Caco-2 (cell line): ENCODE measurements at regions of chr2 and their contacts with region 1.

Region 1: DNA sequence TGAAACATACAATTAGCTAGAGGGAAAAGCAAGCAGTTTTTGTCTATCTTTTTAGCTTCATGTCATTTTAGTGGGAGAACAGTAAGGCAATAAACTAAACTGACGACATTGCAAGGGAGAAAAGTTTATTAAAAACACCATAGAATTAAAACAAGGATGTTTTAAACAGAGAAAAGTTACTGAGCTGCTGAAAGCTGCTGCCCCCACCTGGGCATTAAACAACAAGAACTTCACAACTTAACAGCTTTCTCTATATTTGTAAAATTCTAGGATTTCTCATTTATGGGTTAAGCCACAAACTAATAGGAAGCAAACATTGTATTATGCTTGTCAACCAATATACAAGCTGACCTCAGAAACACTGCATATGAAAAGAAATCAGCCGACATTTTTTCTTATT is 289.2 kb downstream of the ERBB4 start:
- DNase-seq: no peak
- H3K4me3 ChIP-seq: no peak overlapping the region
- H3K4me3 Mint-ChIP-seq: no peak overlapping the region
- H3K27ac Mint-ChIP-seq: no peak overlapping the region
- H3K4me1 ChIP-seq: no peaks in the 10 kb centered on the region
- H3K4me1 Mint-ChIP-seq: no peaks in the 10 kb centered on the region
- H3K27me3 ChIP-seq: no peaks in the 10 kb centered on the region
- H3K27me3 Mint-ChIP-seq: peaks cover 3% of the 10 kb centered on the region
- CTCF ChIP-seq: peak; percentile 25 to 34

Region 2: DNA sequence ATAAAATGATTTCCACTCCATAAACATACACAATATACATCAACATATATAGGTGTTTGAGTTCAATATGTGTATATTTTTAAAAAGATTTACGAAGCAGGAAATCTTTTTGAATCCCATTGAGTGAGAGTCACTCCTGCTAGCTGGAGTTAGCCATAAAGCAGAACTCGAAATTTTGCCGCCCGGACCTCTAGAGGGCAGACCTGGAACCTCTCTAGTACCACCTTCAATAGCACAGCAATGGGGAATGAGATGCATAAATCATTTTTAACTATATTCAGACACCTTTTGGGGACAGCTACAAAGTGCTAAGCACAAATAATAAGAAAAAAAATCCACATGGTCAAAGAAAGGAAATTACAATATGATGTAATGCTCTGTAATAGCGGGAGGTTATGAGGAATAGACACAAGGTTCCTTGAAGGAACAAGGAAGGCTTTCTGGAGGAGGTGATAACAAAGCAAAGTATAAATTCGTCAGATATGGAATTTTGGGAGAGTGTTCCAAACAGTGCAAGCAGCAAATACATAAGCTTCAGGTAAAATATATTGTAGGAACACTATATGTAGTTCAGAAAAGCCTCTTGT is 244.3 kb before region 1 on chr2:
- CTCF ChIA-PET with region 1: no interaction called
- POLR2A ChIA-PET with region 1: no interaction called
- intact Hi-C with region 1: loop called (anchors 10 kb)
- DNase-seq: peak in 1 of 2 experiments; percentile 55
- H3K4me3 ChIP-seq: no peak overlapping the region
- H3K4me3 Mint-ChIP-seq: no peak overlapping the region
- H3K27ac Mint-ChIP-seq: no peak overlapping the region
- H3K4me1 ChIP-seq: peaks cover 4% of the 10 kb centered on the region; the same call in 1 of the 2 replicates
- H3K4me1 Mint-ChIP-seq: peaks cover 11% of the 10 kb centered on the region
- H3K27me3 ChIP-seq: no peaks in the 10 kb centered on the region
- H3K27me3 Mint-ChIP-seq: no peaks in the 10 kb centered on the region
- CTCF ChIP-seq: peak; percentile 41 to 72

Region 3: GRCh38 chr2:212227755-212228154 is 21.7 kb before region 1 on chr2:
- CTCF ChIA-PET with region 1: no interaction called
- POLR2A ChIA-PET with region 1: no interaction called
- intact Hi-C with region 1: no loop called
- DNase-seq: no peak
- H3K4me3 ChIP-seq: no peak overlapping the region
- H3K4me3 Mint-ChIP-seq: no peak overlapping the region
- H3K27ac Mint-ChIP-seq: no peak overlapping the region
- H3K4me1 ChIP-seq: no peaks in the 10 kb centered on the region
- H3K4me1 Mint-ChIP-seq: no peaks in the 10 kb centered on the region
- H3K27me3 ChIP-seq: no peaks in the 10 kb centered on the region
- H3K27me3 Mint-ChIP-seq: peaks cover 3% of the 10 kb centered on the region
- CTCF ChIP-seq: no peak